A673 (cell line): ENCODE measurements at regions of chr12 and their contacts with region 1.

Region 1: GRCh38 chr12:76621582-76622024 is 62.0 kb upstream of the OSBPL8 start:
- DNase-seq: peak; percentile 75
- H3K4me3 ChIP-seq: no peak overlapping the region
- H3K27ac ChIP-seq: no peak overlapping the region
- H3K4me1 ChIP-seq: no peaks in the 10 kb centered on the region
- H3K27me3 ChIP-seq: no peaks in the 10 kb centered on the region
- CTCF ChIP-seq: peak; percentile 93

Region 2: GRCh38 chr12:76441016-76441415 is 180.6 kb before region 1 on chr12:
- CTCF ChIA-PET with region 1: no interaction called
- POLR2A ChIA-PET with region 1: no interaction called
- intact Hi-C with region 1: no loop called
- DNase-seq: no peak
- H3K4me3 ChIP-seq: no peak overlapping the region
- H3K27ac ChIP-seq: no peak overlapping the region
- H3K4me1 ChIP-seq: peaks cover 26% of the 10 kb centered on the region
- H3K27me3 ChIP-seq: no peaks in the 10 kb centered on the region
- CTCF ChIP-seq: no peak

Region 3: GRCh38 chr12:76706101-76706500 is 84.5 kb after region 1 on chr12:
- CTCF ChIA-PET with region 1: no interaction called
- POLR2A ChIA-PET with region 1: no interaction called
- intact Hi-C with region 1: no loop called
- DNase-seq: no peak
- H3K4me3 ChIP-seq: no peak overlapping the region
- H3K27ac ChIP-seq: no peak overlapping the region
- H3K4me1 ChIP-seq: peaks cover 3% of the 10 kb centered on the region
- H3K27me3 ChIP-seq: no peaks in the 10 kb centered on the region
- CTCF ChIP-seq: no peak

Region 4: DNA sequence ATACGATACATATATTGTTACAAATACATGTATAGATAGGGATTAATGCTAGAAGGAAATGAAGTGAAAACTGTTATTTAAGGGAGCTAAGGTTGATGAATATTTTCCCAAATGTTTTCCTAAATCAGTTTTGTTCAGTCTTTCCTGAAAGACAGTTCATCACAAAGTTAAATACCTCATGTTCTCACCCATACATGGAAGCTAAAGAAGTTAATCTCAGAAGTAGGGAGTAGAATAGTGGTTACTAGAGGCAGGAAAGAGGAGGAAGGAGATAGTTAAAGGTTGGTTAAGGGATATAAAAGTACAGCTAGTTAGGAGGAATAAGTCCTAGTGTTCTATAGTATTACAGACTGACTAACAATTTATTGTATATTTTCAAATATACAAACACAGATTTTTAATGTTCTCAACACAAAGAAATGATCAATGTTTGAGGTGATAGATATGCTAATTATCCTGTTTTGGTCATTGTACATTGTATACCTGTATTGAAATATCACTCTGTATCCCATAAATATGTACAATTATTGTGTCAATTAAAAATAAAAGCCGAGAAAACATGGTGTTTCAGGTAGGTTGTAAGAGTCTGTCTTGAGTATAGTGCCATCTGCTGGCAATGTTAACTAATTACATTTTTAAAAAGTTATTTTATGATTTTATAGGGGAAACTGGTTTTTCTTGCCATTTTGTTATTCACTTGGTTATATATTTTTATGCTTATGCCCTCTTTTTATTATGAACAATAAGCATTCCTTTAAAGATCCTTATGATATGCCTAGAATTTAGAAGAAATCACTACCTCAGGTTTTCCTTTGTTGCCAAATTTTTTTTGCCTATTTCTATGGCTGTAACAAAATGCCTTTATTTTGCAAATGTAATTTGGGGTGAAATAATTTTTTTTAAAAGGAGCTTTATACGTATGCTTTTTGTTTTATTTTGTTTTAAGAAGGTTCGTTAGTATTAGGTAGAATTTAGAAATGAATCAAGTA is 169.3 kb after region 1 on chr12:
- CTCF ChIA-PET with region 1: interaction called, 5 read pairs
- POLR2A ChIA-PET with region 1: no interaction called
- intact Hi-C with region 1: loop called (anchors 1 kb)
- DNase-seq: peak; percentile 42
- H3K4me3 ChIP-seq: no peak overlapping the region
- H3K27ac ChIP-seq: no peak overlapping the region
- H3K4me1 ChIP-seq: no peaks in the 10 kb centered on the region
- H3K27me3 ChIP-seq: no peaks in the 10 kb centered on the region
- CTCF ChIP-seq: peak; percentile 69

Region 5: GRCh38 chr12:76927170-76927784 is 305.7 kb after region 1 on chr12:
- CTCF ChIA-PET with region 1: no interaction called
- POLR2A ChIA-PET with region 1: no interaction called
- intact Hi-C with region 1: loop called (anchors 1 kb)
- DNase-seq: peak; percentile 84
- H3K4me3 ChIP-seq: no peak overlapping the region
- H3K27ac ChIP-seq: no peak overlapping the region
- H3K4me1 ChIP-seq: peaks cover 5% of the 10 kb centered on the region
- H3K27me3 ChIP-seq: no peaks in the 10 kb centered on the region
- CTCF ChIP-seq: peak; percentile 79